Spleen (tissue), 13 donors: ENCODE measurements at regions of chr18 and their contacts with region 1.

Region 1: GRCh38 chr18:21109936-21110663 is 1.5 kb downstream of the ROCK1 start:
- DNase-seq: no peak
- H3K4me3 ChIP-seq: peak overlapping the region; percentile 85 to 97 (median 92)
- H3K27ac ChIP-seq: peak overlapping the region in 7 of 8 donors; percentile 96 to 100 (median 99)
- H3K4me1 ChIP-seq: peaks cover 34 to 65% (median 55%) of the 10 kb centered on the region in 6 donors
- H3K27me3 ChIP-seq: no peaks in the 10 kb centered on the region
- CTCF ChIP-seq: no peak
- POLR2A ChIP-seq: no peak

Region 2: DNA sequence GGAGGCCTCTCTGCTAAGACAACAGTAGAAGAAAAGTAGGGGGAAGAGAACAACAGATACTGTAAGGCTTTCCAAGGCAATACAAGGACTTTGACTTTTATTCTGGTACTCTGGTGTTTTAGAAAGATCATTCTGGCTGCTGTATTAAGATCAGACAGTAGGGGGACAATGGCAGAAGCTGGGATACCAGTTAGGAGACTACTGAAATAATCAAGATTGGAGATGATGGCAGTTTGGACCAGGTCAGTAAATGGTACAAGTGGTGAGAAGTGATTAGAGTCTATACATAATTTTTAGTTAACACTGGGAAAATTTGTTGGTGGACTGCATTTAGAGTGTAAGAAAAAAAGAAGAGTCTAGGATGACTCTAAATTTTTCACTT is 138.2 kb before region 1 on chr18:
- intact Hi-C with region 1: loop called (anchors 10 kb)
- DNase-seq: no peak
- H3K4me3 ChIP-seq: no peak overlapping the region
- H3K27ac ChIP-seq: peak overlapping the region in 1 of 8 donors; percentile 5
- H3K4me1 ChIP-seq: peaks cover 0 to 10% (median 0%) of the 10 kb centered on the region in 6 donors
- H3K27me3 ChIP-seq: no peaks in the 10 kb centered on the region
- CTCF ChIP-seq: peak in 10 of 11 experiments; percentile 5 to 57 (median 43)
- POLR2A ChIP-seq: no peak

Region 3: DNA sequence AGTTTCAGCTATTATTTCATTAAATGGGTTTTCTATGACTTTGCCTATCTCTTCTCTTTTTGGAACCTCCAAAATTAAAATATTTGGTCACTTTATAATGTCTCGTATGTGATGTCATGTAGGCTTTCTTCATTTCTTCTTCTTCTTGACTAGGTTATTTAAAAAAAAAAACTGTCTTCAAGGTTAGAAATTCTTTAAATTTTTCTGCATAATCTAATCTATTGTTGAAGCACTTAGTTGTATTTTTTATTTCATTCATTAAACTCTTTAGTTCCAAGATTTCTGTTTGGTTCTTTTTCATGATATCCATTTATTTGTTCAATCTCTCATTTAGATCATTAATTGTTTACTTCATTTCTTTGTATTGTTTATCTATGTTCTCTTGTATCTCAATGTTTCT is 45.3 kb after region 1 on chr18:
- intact Hi-C with region 1: no loop called
- DNase-seq: no peak
- H3K4me3 ChIP-seq: no peak overlapping the region
- H3K27ac ChIP-seq: no peak overlapping the region
- H3K4me1 ChIP-seq: no peaks in the 10 kb centered on the region
- H3K27me3 ChIP-seq: no peaks in the 10 kb centered on the region
- CTCF ChIP-seq: no peak
- POLR2A ChIP-seq: no peak

Region 4: GRCh38 chr18:21215485-21215884 is 105.4 kb after region 1 on chr18:
- intact Hi-C with region 1: no loop called
- DNase-seq: no peak
- H3K4me3 ChIP-seq: no peak overlapping the region
- H3K27ac ChIP-seq: no peak overlapping the region
- H3K4me1 ChIP-seq: no peaks in the 10 kb centered on the region
- H3K27me3 ChIP-seq: peaks cover 0 to 4% (median 0%) of the 10 kb centered on the region in 7 donors
- CTCF ChIP-seq: no peak
- POLR2A ChIP-seq: no peak

Region 5: GRCh38 chr18:21289827-21290226 is 179.7 kb after region 1 on chr18:
- intact Hi-C with region 1: no loop called
- DNase-seq: no peak
- H3K4me3 ChIP-seq: no peak overlapping the region
- H3K27ac ChIP-seq: no peak overlapping the region
- H3K4me1 ChIP-seq: no peaks in the 10 kb centered on the region
- H3K27me3 ChIP-seq: peaks cover 0 to 13% (median 0%) of the 10 kb centered on the region in 7 donors
- CTCF ChIP-seq: no peak
- POLR2A ChIP-seq: no peak

Region 6: GRCh38 chr18:21433436-21433835 is 323.3 kb after region 1 on chr18:
- intact Hi-C with region 1: no loop called
- DNase-seq: no peak
- H3K4me3 ChIP-seq: no peak overlapping the region
- H3K27ac ChIP-seq: no peak overlapping the region
- H3K4me1 ChIP-seq: no peaks in the 10 kb centered on the region
- H3K27me3 ChIP-seq: no peaks in the 10 kb centered on the region
- CTCF ChIP-seq: no peak
- POLR2A ChIP-seq: no peak